Endothelial cell of umbilical vein (primary cell): ENCODE measurements at regions of chr1 and their contacts with region 1.

Region 1: DNA sequence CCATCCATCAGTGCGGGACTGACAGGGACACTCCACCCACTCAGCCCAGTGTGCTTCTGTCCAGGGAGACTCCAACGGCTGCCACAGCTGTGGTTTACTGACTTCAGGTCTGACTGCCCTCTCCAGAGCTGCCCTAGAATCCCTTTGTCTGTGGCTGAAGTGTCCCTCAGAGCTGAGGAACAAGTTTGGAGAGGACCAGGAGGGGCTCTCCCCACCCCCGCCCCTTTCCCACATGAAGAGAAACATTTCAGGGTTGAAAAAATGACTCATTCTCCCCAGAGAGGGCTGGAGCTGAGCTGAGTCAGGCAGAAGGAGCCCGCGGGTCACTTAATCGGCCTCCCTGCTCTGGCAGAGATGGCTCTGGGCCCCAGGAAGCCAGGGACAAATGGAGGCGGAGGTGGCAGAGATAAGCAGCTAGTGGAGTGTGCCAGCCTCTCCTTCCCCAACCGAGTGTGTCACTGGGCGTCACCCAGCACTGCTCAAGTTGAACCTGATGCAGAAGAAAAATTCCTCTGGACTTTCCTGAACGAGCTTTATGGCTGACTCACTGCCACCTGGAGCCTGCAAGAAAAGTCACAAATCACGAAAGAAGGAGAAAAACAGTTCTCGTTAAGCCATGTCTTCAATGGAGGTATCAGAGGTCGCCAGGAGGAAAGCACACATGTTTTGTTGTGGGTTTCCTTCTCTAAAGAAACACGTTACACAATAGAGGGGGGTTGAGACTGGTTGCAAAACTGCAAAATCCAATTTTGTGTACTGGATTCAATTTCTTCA is 34.3 kb upstream of the ECE1 start:
- DNase-seq: peak; percentile 93
- H3K4me3 ChIP-seq: no peak overlapping the region
- H3K27ac ChIP-seq: peak overlapping the region; percentile 96
- H3K4me1 ChIP-seq: peaks cover 62% of the 10 kb centered on the region
- H3K27me3 ChIP-seq: no peaks in the 10 kb centered on the region
- CTCF ChIP-seq: no peak
- POLR2A ChIP-seq: peak; percentile 39

Region 2: DNA sequence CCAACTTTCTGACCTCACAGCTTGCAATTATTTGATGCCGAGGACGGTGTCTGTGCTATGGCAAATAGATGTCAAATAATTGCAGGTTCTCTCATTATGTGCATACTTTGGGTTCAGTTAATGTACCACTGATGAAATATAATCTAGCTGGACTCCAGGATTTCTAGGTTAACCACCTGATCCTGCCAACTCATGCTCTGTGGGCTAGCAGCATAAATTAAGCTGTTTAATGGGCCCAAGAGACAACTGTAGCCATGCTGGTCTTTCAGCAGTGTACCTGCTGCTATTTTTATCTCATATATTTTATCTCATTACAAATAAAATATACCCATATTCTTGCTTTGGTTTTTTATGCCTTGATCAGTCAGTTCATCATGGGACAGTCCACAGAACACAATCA is 494.2 kb before region 1 on chr1:
- CTCF ChIA-PET with region 1: no interaction called
- POLR2A ChIA-PET with region 1: no interaction called
- dilution Hi-C with region 1: no loop called
- intact Hi-C with region 1: no loop called
- DNase-seq: no peak
- H3K4me3 ChIP-seq: no peak overlapping the region
- H3K27ac ChIP-seq: no peak overlapping the region
- H3K4me1 ChIP-seq: no peaks in the 10 kb centered on the region
- H3K27me3 ChIP-seq: no peaks in the 10 kb centered on the region
- CTCF ChIP-seq: no peak
- POLR2A ChIP-seq: no peak

Region 3: GRCh38 chr1:21313203-21313885 is 11.2 kb before region 1 on chr1:
- CTCF ChIA-PET with region 1: interaction called, 22 read pairs
- POLR2A ChIA-PET with region 1: no interaction called
- dilution Hi-C with region 1: no loop called
- intact Hi-C with region 1: loop called (anchors 1 kb)
- DNase-seq: peak; percentile 56
- H3K4me3 ChIP-seq: no peak overlapping the region
- H3K27ac ChIP-seq: no peak overlapping the region
- H3K4me1 ChIP-seq: peaks cover 28% of the 10 kb centered on the region
- H3K27me3 ChIP-seq: no peaks in the 10 kb centered on the region
- CTCF ChIP-seq: no peak
- POLR2A ChIP-seq: no peak

Region 4: DNA sequence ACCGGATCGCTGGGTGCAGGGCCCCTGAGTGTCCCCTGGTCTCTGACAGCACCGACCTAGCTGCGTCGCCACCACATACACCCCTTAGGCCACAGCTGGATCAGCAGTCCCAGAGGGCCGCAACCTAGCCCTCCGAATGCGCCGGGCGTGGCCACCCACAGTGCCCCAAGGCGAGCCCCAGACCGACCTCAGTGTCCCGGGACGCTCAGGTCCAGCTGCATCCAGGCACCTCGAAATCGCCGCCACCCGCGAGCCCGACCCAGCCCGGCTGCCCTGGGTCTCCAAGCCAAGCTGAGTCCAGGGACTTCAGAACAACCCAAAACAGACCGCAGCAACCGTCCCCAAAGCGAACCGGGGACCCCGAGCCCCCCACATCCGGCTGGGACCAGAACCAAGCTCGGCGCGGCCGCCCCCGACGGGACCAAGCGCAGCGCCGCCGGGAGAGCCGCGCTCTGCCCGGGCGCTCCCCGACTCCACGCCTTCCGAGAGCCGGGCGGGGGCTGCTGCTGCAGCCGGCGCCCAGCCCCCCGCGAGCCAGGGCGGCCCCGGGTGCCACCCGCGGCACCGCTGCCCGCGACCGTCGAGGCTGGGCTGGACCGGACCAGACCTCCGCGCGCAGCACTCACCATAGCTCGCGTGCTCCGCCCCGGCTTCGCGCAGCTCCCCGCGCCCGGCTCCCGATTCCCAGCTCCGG is 20.3 kb after region 1 on chr1:
- CTCF ChIA-PET with region 1: interaction called, 7 read pairs
- POLR2A ChIA-PET with region 1: interaction called, 6 read pairs
- dilution Hi-C with region 1: no loop called
- intact Hi-C with region 1: loop called (anchors 1 kb)
- DNase-seq: no peak
- H3K4me3 ChIP-seq: peak overlapping the region; percentile 40 to 82 (median 66)
- H3K27ac ChIP-seq: peak overlapping the region; percentile 14
- H3K4me1 ChIP-seq: peaks cover 38% of the 10 kb centered on the region
- H3K27me3 ChIP-seq: no peaks in the 10 kb centered on the region
- CTCF ChIP-seq: no peak
- POLR2A ChIP-seq: no peak